HepG2 (cell line): ENCODE measurements at regions of chr6 and their contacts with region 1.

Region 1: GRCh38 chr6:27672113-27672799 is 199.4 kb upstream of the ZNF184 start:
- DNase-seq: peak; percentile 91
- ATAC-seq: peak; percentile 71
- H3K4me3 ChIP-seq: peak overlapping the region; percentile 64 to 69 (median 67)
- H3K27ac ChIP-seq: peak overlapping the region; percentile 35
- H3K4me1 ChIP-seq: peaks cover 28% of the 10 kb centered on the region; the same call in 1 of the 2 replicates
- H3K27me3 ChIP-seq: no peaks in the 10 kb centered on the region; a peak in 1 of 5 replicates
- CTCF ChIP-seq: no peak
- EP300 ChIP-seq: no peak; a peak in 1 of 4 replicates
- POLR2A ChIP-seq: no peak
- RAD21 ChIP-seq: no peak

Region 2: GRCh38 chr6:26568601-26569432 is 1103.4 kb before region 1 on chr6:
- CTCF ChIA-PET with region 1: no interaction called
- POLR2A ChIA-PET with region 1: no interaction called
- in situ Hi-C with region 1: no loop called
- intact Hi-C with region 1: loop called (anchors 5 kb)
- DNase-seq: peak; percentile 95
- ATAC-seq: peak; percentile 35
- H3K4me3 ChIP-seq: peak overlapping the region; percentile 55 to 85 (median 78)
- H3K27ac ChIP-seq: peak overlapping the region; percentile 7
- H3K4me1 ChIP-seq: peaks cover 61% of the 10 kb centered on the region
- H3K27me3 ChIP-seq: no peaks in the 10 kb centered on the region; a peak in 1 of 5 replicates
- CTCF ChIP-seq: peak; percentile 5; the same call in 1 of the 2 replicates
- EP300 ChIP-seq: 0 out of 4 replicates have a peak, but pooled peaks of 1 of the 2 experiments have one; percentile 5
- POLR2A ChIP-seq: no peak
- RAD21 ChIP-seq: no peak

Region 3: GRCh38 chr6:27518881-27519795 is 153.1 kb before region 1 on chr6:
- CTCF ChIA-PET with region 1: no interaction called
- POLR2A ChIA-PET with region 1: no interaction called
- in situ Hi-C with region 1: no loop called
- intact Hi-C with region 1: loop called (anchors 1 kb)
- DNase-seq: peak; percentile 82
- ATAC-seq: peak; percentile 83
- H3K4me3 ChIP-seq: peak overlapping the region; percentile 72 to 86 (median 85)
- H3K27ac ChIP-seq: peak overlapping the region; percentile 39
- H3K4me1 ChIP-seq: peaks cover 19% of the 10 kb centered on the region
- H3K27me3 ChIP-seq: peaks cover 2 to 18% of the 10 kb centered on the region in 2 experiments; a peak in 1 of 5 replicates
- CTCF ChIP-seq: peak; percentile 73
- EP300 ChIP-seq: no peak
- POLR2A ChIP-seq: no peak
- RAD21 ChIP-seq: peak; percentile 43; the same call in 1 of the 2 replicates

Region 4: DNA sequence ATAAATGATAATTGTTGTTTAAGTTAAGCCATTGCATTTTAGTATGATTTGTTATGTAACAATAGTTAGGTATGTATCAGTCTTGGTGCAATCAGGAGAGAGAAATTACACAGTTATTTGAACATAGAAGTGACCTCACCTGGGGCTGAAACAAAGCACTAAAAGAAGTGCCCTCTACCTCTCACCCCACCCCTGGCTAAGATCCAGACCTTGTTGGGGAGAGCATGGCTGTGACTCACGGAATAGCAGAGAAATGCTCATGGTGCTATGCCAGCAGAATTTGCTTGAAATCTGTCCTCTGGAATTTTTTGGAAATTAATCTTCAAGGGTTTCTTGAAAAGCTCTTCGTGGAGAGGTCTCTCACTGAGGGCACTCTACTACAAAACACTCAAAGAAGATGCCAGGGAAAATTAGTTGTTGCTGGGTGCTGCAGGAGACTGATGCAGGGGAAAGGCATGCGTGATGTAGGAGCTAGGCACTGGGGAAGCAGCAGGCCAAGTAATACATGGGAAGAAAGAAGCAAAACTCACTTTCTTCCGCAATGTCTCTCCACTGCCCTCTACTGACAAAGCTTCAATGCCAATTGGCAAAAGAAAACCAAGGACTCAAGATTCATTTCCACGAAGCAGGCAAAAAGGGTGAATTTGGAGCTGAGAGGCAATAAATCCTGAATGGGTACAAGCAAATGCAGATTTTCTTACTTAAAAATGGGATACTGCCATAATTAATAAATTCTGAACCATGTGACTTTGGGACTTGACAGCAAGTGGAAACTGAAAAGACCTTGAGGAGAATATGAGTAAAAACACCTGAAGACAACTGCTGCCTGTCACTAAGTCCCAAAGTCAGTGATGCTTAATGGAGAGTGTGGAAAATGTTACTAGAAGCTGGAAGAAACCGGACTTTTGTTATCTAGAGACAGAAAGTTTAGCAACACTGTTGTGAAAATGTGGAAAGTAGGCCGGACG is 63.1 kb before region 1 on chr6:
- CTCF ChIA-PET with region 1: no interaction called
- POLR2A ChIA-PET with region 1: no interaction called
- in situ Hi-C with region 1: no loop called
- intact Hi-C with region 1: no loop called
- DNase-seq: peak; percentile 61
- ATAC-seq: peak; percentile 31; the same call in 2 of the 3 replicates
- H3K4me3 ChIP-seq: no peak overlapping the region
- H3K27ac ChIP-seq: no peak overlapping the region
- H3K4me1 ChIP-seq: peaks cover 31% of the 10 kb centered on the region
- H3K27me3 ChIP-seq: no peaks in the 10 kb centered on the region
- CTCF ChIP-seq: peak; percentile 85
- EP300 ChIP-seq: no peak
- POLR2A ChIP-seq: no peak
- RAD21 ChIP-seq: peak; percentile 47; the same call in 1 of the 2 replicates

Region 5: GRCh38 chr6:27630727-27631608 is 41.3 kb before region 1 on chr6:
- CTCF ChIA-PET with region 1: no interaction called
- POLR2A ChIA-PET with region 1: no interaction called
- in situ Hi-C with region 1: no loop called
- intact Hi-C with region 1: loop called (anchors 1 kb)
- DNase-seq: peak; percentile 74
- ATAC-seq: peak; percentile 94
- H3K4me3 ChIP-seq: peak overlapping the region; percentile 48 to 66 (median 55)
- H3K27ac ChIP-seq: no peak overlapping the region
- H3K4me1 ChIP-seq: peaks cover 20% of the 10 kb centered on the region
- H3K27me3 ChIP-seq: peaks cover 0 to 5% of the 10 kb centered on the region in 2 experiments; a peak in 3 of 5 replicates
- CTCF ChIP-seq: peak; percentile 45
- EP300 ChIP-seq: no peak
- POLR2A ChIP-seq: no peak
- RAD21 ChIP-seq: no peak

Region 6: GRCh38 chr6:27720607-27721580 is 48.6 kb after region 1 on chr6:
- CTCF ChIA-PET with region 1: no interaction called
- POLR2A ChIA-PET with region 1: no interaction called
- in situ Hi-C with region 1: no loop called
- intact Hi-C with region 1: no loop called
- DNase-seq: peak; percentile 21
- ATAC-seq: peak; percentile 72
- H3K4me3 ChIP-seq: peak overlapping the region in 2 of 3 experiments; percentile 8 to 24; a peak in 1 of 6 replicates
- H3K27ac ChIP-seq: no peak overlapping the region
- H3K4me1 ChIP-seq: peaks cover 30% of the 10 kb centered on the region
- H3K27me3 ChIP-seq: no peaks in the 10 kb centered on the region
- CTCF ChIP-seq: no peak
- EP300 ChIP-seq: no peak
- POLR2A ChIP-seq: no peak
- RAD21 ChIP-seq: no peak

Region 7: GRCh38 chr6:27753668-27754407 is 81.6 kb after region 1 on chr6:
- CTCF ChIA-PET with region 1: no interaction called
- POLR2A ChIA-PET with region 1: no interaction called
- in situ Hi-C with region 1: no loop called
- intact Hi-C with region 1: loop called (anchors 1 kb)
- DNase-seq: peak; percentile 83
- ATAC-seq: peak; percentile 76
- H3K4me3 ChIP-seq: peak overlapping the region; percentile 63 to 88 (median 78)
- H3K27ac ChIP-seq: no peak overlapping the region
- H3K4me1 ChIP-seq: peaks cover 21% of the 10 kb centered on the region
- H3K27me3 ChIP-seq: peaks cover 0 to 3% of the 10 kb centered on the region in 2 experiments; a peak in 1 of 5 replicates
- CTCF ChIP-seq: no peak
- EP300 ChIP-seq: no peak
- POLR2A ChIP-seq: no peak
- RAD21 ChIP-seq: no peak